ENCODE measurements at regions of chr6 and their contacts with region 1.

Region 1: DNA sequence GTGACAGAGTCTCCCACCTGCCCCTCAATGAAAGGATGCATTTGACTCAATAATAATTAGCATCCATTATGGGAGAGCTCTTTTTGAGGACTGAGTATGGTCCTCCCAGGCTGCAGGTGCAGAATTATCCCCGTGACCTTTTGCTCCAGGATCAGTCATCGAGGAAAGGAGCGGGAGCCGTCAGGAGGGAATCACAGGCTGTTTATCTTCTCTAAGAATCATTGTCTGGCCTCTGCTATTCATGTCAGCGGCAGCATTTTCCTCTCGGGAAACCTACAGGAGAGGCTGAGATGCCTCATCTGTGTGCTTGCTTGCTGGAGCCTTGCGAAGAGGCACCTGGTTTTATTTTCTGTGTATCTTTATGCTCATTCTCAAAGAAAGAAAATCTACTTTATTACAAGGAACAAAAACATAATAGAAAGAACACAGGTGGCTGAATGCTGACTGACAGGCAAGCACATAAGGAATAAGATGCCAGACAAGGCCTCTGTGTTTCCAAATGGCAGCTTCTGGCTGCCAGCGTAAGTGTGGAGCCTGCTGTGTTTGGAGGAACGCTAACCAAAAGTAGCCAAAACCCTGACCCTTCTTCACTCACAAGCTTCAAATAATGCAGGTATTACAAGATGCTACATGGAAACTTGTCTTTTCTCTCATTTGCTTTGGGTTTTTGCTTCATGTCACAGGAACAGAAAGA is 539.1 kb upstream of the MARCKS start:
- DNase-seq: no peak
- H3K4me3 ChIP-seq: no peak overlapping the region
- H3K27ac ChIP-seq: peak overlapping the region; percentile 3
- H3K4me1 ChIP-seq: peaks cover 14% of the 10 kb centered on the region
- H3K27me3 ChIP-seq: no peaks in the 10 kb centered on the region
- CTCF ChIP-seq: no peak
- POLR2A ChIP-seq: no peak

Region 2: DNA sequence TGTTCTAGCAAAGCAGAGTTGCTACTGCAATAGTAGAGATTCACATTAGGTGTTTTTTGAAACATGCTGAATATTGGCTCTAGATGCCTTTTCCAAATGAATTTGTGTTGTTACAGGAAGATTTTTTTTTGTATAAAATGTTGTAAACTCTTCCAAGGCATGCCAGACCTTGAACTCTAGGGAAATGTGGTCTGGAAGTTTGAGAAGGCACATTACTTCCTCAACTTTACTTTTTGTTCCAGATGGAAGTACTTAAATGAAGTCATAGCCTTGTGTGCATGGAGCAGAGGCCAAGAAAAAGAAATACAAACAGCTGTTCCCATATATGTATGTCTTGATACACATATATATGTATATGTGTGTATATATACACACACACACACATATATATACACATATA is 46.6 kb before region 1 on chr6:
- CTCF ChIA-PET with region 1: no interaction called
- POLR2A ChIA-PET with region 1: no interaction called
- dilution Hi-C with region 1: no loop called
- intact Hi-C with region 1: no loop called
- DNase-seq: no peak
- H3K4me3 ChIP-seq: no peak overlapping the region
- H3K27ac ChIP-seq: no peak overlapping the region
- H3K4me1 ChIP-seq: peaks cover 9% of the 10 kb centered on the region
- H3K27me3 ChIP-seq: no peaks in the 10 kb centered on the region
- CTCF ChIP-seq: no peak
- POLR2A ChIP-seq: no peak

Region 3: DNA sequence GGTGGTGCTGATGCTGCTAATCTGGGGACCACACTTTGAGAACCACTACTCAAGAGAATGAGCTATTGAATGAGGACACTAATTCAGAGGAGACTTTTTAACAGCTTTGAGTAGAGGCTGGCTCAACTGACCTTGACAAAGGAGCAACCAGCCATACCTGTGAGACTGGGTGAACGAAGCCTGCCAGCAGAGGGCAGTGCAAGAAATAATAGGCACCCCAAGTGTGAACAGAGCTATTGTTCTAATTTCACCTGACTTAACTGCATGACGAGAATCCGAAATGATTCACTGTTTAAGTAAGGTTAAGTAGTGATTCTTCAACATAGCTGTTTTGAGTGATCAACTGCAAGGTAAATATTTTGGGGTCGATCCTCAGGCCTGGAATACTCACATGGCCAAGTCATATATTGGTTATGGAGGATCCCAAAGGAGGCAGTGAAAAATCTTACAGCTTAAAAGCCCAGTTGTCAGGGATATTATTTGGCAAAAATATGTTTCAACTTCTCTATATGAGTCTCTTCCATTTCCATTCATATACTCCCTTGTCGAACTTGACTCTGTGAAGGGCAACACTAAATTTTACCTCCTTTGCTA is 11.4 kb before region 1 on chr6:
- CTCF ChIA-PET with region 1: interaction called, 11 read pairs
- POLR2A ChIA-PET with region 1: no interaction called
- dilution Hi-C with region 1: no loop called
- intact Hi-C with region 1: no loop called
- DNase-seq: peak; percentile 36
- H3K4me3 ChIP-seq: no peak overlapping the region
- H3K27ac ChIP-seq: no peak overlapping the region
- H3K4me1 ChIP-seq: no peaks in the 10 kb centered on the region
- H3K27me3 ChIP-seq: no peaks in the 10 kb centered on the region
- CTCF ChIP-seq: peak; percentile 39 to 49
- POLR2A ChIP-seq: no peak